Panc1 (cell line): ENCODE measurements at regions of chr1 and their contacts with region 1.

Region 1: DNA sequence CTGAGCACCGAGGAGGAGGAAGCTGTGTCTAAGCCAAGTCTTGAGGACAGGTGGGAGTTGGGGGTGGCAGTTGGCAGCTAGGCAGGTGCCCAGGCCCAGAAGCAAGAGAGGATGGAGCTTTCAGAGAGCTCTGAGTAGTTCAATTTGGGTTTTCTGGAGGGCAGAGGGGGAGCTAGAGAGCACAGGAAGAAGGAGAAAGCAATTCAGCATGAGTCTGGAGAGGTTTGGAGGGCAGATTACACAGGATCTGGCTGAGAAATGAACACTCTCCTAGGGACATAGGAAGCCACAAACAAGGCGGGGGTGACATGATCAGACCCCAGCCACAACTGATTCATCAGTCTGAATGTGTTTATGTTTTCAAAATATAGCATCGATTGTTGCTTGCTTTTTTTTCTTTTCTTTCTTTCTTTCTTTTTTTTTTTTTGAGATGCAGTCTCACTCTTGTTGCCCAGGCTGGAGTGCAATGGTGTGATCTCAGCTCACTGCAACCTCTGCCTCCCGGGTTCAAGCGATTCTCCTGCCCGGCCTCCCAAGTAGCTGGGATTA is 23.8 kb downstream of the PTPRF start:
- DNase-seq: no peak
- ATAC-seq: peak; percentile 83
- H3K4me3 ChIP-seq: no peak overlapping the region
- H3K27ac ChIP-seq: no peak overlapping the region
- H3K4me1 ChIP-seq: no peaks in the 10 kb centered on the region
- H3K27me3 ChIP-seq: no peaks in the 10 kb centered on the region
- CTCF ChIP-seq: no peak; the same call in 1 of the 2 replicates

Region 2: GRCh38 chr1:43650310-43651085 is 96.0 kb after region 1 on chr1:
- CTCF ChIA-PET with region 1: interaction called, 12 read pairs
- POLR2A ChIA-PET with region 1: interaction called, 5 read pairs
- in situ Hi-C with region 1: no loop called
- intact Hi-C with region 1: no loop called
- DNase-seq: peak; percentile 87
- ATAC-seq: peak; percentile 90
- H3K4me3 ChIP-seq: peak overlapping the region; percentile 96 to 100
- H3K27ac ChIP-seq: peak overlapping the region; percentile 87
- H3K4me1 ChIP-seq: peaks cover 20% of the 10 kb centered on the region
- H3K27me3 ChIP-seq: no peaks in the 10 kb centered on the region
- CTCF ChIP-seq: no peak